Mammary epithelial cell (primary cell): ENCODE measurements at regions of chr3 and their contacts with region 1.

Region 1: GRCh38 chr3:136861890-136862616 is at the start of gene NCK1:
- DNase-seq: peak; percentile 99
- H3K4me3 ChIP-seq: peak within 1 kb of the TSS; percentile 63 to 88 (median 72)
- H3K27ac ChIP-seq: peak within 1 kb of the TSS; percentile 77
- H3K4me1 ChIP-seq: peaks cover 11% of the 10 kb centered on the region
- H3K27me3 ChIP-seq: no peaks in the 10 kb centered on the region
- CTCF ChIP-seq: peak in 1 of 2 donors; percentile 6
- total RNA-seq, gene NCK1: 46.2 to 47.0 TPM

Region 2: DNA sequence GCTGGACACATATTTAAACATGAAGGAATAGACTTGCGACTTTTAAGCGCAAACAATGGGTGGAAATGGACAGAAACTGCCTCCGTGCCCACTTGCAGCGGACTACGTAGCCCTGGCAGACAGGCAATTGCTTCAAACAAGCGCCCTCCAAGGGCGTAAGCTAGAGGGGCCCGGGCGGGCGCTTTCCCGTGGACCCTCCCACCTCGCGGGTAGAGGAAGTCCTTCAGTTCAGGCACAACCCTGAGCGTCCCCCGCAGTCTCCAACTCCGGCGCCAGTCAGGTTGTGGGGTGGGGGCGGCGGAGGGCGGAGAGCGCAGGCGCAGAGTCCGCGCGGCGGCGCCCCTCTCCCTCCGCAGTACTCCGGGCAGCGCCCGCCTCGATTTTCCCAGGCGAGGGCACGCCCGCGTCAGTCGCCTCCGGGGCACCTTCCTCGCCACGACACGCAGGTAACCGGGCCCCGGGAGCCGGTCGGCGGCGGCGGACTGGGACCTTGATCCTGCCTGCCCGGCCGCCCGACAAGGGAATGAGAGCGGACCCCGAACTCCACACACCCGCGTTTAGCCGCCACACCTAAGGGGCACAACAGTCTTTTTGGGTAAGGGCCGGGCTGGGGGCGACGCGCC is 43.2 kb before region 1 on chr3 and contains the start of gene SLC35G2:
- CTCF ChIA-PET with region 1: no interaction called
- dilution Hi-C with region 1: no loop called
- in situ Hi-C with region 1: no loop called
- intact Hi-C with region 1: loop called (anchors 2 kb)
- DNase-seq: no peak
- H3K4me3 ChIP-seq: peak within 1 kb of the TSS; percentile 48 to 59 (median 58)
- H3K27ac ChIP-seq: peak within 1 kb of the TSS; percentile 36
- H3K4me1 ChIP-seq: peaks cover 19% of the 10 kb centered on the region
- H3K27me3 ChIP-seq: no peaks in the 10 kb centered on the region
- CTCF ChIP-seq: no peak
- total RNA-seq, gene SLC35G2: 3.9 to 6.0 TPM

Region 3: DNA sequence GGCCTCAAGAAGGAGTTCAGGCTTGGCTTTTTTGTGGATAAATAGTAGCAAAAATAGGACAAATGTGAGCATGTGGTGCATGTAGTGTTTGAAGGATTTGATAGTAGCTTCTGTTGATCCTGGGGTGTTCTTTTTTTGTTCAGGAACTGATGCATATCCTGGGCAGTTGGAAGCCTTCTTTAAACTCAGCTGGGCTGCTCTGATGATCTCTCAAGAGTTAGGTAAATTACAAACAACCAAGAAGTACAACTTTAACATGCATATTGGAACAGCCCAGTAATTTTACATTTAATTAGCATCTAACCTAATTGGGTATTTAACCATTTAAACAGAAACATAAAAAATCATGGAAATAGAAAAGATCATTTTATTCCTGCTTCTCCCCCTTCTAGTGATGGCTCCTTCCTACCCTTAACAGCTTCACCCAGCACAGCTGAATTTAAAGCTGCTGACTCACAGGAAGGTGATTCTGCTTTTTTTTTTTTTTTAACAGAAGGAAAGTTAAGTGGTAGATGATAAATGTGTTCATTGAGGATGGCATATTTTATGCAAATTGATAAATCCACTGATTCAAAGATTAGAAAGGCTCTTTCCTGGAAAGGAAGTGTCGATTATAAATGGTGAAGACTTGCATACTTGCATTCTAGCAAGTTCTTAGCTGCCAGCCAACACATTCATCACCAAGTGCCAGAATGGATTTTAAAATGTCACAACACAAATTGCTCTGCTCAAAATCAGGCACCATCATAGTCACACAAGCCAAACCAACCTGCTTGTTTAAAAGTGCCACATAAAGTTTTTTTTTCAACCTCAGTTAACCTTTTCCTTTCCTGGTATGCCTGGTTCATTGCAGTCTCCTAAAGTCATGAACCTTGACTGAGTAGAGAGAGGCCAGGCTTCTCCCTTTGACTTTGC is 23.2 kb before region 1 on chr3:
- CTCF ChIA-PET with region 1: no interaction called
- dilution Hi-C with region 1: no loop called
- in situ Hi-C with region 1: no loop called
- intact Hi-C with region 1: loop called (anchors 2 kb)
- DNase-seq: peak; percentile 40
- H3K4me3 ChIP-seq: no peak overlapping the region
- H3K27ac ChIP-seq: no peak overlapping the region
- H3K4me1 ChIP-seq: peaks cover 13% of the 10 kb centered on the region
- H3K27me3 ChIP-seq: no peaks in the 10 kb centered on the region
- CTCF ChIP-seq: no peak

Region 4: DNA sequence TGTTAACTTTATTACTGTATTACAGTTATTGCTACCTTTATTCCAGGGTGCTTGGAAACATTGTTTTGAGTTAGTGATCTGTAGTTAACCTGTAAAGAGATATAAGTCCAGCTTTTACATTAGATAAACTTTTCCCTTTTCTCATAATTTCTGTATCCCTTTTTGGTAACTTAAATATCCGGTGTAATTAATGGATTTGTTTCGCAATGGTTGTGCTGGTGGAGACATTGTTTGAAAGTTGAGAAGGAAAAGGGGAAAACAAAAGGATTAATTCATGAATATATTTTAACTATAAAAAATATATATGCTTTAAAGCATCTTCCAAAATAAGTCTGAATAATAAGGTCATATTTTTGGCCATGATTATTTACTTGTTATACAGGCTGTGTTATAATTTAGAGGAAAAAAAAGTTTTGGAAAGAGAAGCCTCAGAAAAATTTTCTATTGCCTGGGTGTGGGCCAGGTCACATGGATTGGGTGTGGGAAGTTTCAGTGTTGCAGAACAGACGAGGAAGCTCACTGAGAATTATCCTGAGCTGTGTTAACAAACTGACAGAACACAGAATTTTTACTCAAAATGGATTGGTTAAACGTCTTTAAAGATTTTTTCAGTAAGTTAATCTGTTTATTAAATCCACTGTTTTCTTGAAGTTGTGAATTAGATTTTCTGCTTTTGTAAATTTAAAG is 68.1 kb after region 1 on chr3:
- CTCF ChIA-PET with region 1: no interaction called
- dilution Hi-C with region 1: loop called (anchors 5 kb)
- in situ Hi-C with region 1: no loop called
- intact Hi-C with region 1: loop called (anchors 5 kb)
- DNase-seq: peak; percentile 64
- H3K4me3 ChIP-seq: peak overlapping the region; percentile 39 to 93 (median 57)
- H3K27ac ChIP-seq: peak overlapping the region; percentile 81
- H3K4me1 ChIP-seq: peaks cover 24% of the 10 kb centered on the region
- H3K27me3 ChIP-seq: no peaks in the 10 kb centered on the region
- CTCF ChIP-seq: no peak

Region 5: DNA sequence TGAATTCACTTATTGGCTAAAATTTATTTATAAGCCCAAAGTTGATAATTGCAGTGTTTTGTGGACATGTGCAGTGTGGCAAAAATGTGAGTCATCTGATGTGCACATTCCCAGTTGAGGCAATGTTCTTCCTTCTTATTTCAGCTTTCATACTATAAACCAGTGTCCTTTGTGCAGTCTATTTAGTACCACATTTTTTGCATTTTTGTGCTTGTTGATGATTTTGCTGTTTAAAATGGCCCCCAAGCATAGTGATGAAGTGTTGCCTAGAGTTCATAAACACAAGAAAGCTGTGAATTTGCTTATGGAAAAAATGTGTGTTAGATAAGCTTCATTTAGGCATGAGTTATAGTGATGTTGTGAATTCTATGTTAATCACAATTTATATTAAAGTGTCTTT is 76.3 kb after region 1 on chr3:
- CTCF ChIA-PET with region 1: no interaction called
- dilution Hi-C with region 1: loop called (anchors 5 kb)
- in situ Hi-C with region 1: no loop called
- intact Hi-C with region 1: loop called (anchors 5 kb)
- DNase-seq: no peak
- H3K4me3 ChIP-seq: no peak overlapping the region
- H3K27ac ChIP-seq: peak overlapping the region; percentile 18
- H3K4me1 ChIP-seq: peaks cover 23% of the 10 kb centered on the region
- H3K27me3 ChIP-seq: no peaks in the 10 kb centered on the region
- CTCF ChIP-seq: no peak

Region 6: DNA sequence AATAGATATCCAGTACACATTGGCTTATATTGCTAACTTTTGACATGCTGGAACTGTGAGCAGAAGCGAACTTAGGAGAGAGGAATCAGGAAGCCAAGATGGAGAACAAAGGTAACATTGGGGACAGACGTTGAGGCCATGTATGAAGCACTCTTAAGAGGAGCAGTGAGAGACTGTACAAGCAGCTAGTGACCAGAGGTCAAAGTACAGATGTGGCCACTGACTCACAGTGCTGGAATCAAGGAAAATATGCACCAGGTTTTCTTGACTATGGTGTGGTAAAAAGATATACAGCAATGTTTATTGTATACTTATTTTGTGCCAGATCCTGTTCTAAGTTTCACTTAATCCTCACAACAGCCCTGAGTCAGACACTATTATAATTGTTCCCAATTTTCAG is 93.8 kb after region 1 on chr3:
- CTCF ChIA-PET with region 1: no interaction called
- dilution Hi-C with region 1: no loop called
- in situ Hi-C with region 1: no loop called
- intact Hi-C with region 1: loop called (anchors 5 kb)
- DNase-seq: peak; percentile 61
- H3K4me3 ChIP-seq: no peak overlapping the region
- H3K27ac ChIP-seq: peak overlapping the region; percentile 55
- H3K4me1 ChIP-seq: peaks cover 78% of the 10 kb centered on the region
- H3K27me3 ChIP-seq: no peaks in the 10 kb centered on the region
- CTCF ChIP-seq: no peak

Region 7: GRCh38 chr3:136994772-136995516 is 132.9 kb after region 1 on chr3:
- CTCF ChIA-PET with region 1: no interaction called
- dilution Hi-C with region 1: no loop called
- in situ Hi-C with region 1: no loop called
- intact Hi-C with region 1: loop called (anchors 5 kb)
- DNase-seq: peak; percentile 98
- H3K4me3 ChIP-seq: no peak overlapping the region
- H3K27ac ChIP-seq: peak overlapping the region; percentile 91
- H3K4me1 ChIP-seq: peaks cover 55% of the 10 kb centered on the region
- H3K27me3 ChIP-seq: no peaks in the 10 kb centered on the region
- CTCF ChIP-seq: no peak

Region 8: DNA sequence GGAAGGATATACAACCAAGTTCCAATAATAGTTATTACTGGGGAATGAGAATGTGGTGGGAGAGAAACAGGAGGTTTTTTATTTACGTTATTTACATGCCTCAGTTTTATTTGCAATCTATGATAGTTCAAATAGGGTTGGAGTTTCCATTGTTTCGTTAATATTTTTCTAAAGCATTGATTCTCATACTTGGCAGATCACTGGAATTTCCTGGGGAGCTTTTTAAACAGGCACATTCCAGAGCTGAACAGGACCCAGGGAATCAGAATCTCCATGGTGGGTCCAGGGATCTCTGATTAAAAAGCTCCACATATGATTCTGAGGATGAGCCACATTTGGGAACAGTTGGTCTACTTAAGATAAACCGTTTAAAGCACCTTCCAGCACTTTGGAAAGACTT is 219.7 kb after region 1 on chr3:
- CTCF ChIA-PET with region 1: no interaction called
- dilution Hi-C with region 1: no loop called
- in situ Hi-C with region 1: no loop called
- intact Hi-C with region 1: no loop called
- DNase-seq: no peak
- H3K4me3 ChIP-seq: no peak overlapping the region
- H3K27ac ChIP-seq: no peak overlapping the region
- H3K4me1 ChIP-seq: no peaks in the 10 kb centered on the region
- H3K27me3 ChIP-seq: no peaks in the 10 kb centered on the region
- CTCF ChIP-seq: no peak

Region 9: GRCh38 chr3:137542049-137542448 is 680.0 kb after region 1 on chr3:
- CTCF ChIA-PET with region 1: no interaction called
- dilution Hi-C with region 1: no loop called
- in situ Hi-C with region 1: no loop called
- intact Hi-C with region 1: no loop called
- DNase-seq: no peak
- H3K4me3 ChIP-seq: no peak overlapping the region
- H3K27ac ChIP-seq: no peak overlapping the region
- H3K4me1 ChIP-seq: no peaks in the 10 kb centered on the region
- H3K27me3 ChIP-seq: no peaks in the 10 kb centered on the region
- CTCF ChIP-seq: no peak